Posterior vena cava (tissue), 2 donors: ENCODE measurements at regions of chr13 and their contacts with region 1.

Region 1: GRCh38 chr13:65615506-65615905 is 1614.6 kb downstream of the PCDH9 start:
- DNase-seq: no peak

Region 2: DNA sequence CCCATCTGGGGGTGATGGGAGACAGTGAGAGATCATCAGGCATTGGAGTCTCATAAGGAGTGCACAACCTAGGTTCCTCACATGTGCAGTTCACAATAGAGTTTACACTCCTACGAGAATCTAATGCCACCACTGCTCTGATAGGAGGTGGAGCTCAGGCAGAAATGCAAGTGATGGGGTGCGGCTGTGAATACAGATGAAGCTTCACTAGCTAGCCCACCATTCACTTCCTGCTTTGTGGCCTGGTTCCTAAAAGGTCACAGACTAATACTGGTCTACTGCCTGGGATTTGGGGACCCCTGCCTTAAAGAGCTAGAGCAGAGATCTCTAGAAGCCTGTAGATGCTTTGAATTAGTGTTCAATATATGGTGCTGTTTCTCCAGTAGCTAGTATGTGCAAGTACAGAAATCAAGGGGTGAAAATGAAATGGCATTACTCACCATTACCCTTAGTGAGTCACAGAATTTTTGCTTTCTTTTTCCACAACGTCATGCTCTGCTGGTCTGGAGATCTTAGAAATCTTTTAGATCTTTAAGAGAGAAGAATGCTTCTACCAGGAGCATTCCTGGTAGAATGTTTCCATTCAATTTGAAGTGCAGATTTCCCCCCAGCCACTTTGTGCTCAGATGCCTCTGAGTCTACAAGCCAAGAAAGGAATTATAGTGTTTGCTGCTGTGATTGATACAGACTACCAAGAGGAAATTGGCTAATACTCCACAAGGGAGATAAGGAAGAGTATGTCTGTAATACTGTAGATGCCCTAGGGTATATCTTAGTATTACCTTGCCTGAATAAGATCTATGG is 686.6 kb before region 1 on chr13:
- intact Hi-C with region 1: no loop called
- DNase-seq: no peak

Region 3: GRCh38 chr13:65926750-65927171 is 311.3 kb after region 1 on chr13:
- intact Hi-C with region 1: loop called in 1 of 2 experiments (anchors 5 kb)
- DNase-seq: no peak